ENCODE measurements at regions of chr7 and their contacts with region 1.

Region 1: DNA sequence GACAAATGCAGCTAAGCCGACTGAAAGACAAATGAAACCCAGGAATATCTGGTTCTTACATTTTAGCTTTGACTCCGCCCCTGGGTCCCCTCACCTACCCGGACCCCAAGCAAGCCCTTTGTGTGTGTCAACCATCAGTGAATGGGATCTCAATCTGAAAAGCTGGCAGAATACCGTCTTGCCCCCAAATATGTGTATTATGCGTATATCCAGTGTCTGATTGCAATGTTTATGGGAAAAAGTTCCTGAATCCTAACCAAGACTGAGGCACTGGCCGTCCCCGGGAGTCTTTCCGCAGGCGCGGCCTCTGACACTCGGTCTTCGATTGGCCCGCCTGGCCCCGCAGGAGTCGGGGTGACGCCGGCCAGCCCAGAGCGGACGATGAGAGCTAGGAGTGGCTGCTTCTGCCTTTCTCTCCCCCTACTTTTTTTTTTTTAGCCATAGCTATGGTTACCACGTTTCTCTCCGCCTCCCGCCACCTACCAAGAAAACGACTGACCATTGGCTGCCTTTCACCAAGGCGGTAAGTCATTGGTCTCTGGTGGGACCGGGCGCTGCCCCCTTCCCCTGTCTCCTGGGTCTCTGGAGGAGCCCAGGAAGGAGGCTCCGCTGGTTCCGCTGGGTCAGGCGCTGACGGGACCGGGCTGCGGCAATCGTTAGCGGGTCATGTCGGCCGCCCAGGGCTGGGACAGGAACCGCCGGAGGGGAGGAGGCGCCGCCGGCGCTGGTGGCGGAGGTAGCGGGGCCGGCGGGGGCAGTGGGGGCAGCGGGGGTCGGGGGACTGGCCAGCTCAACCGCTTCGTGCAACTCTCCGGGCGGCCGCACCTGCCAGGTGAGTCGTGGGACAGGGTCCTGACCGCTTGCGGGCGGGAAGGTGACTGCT is at the start of gene KLHDC10:
- DNase-seq: peak; percentile 100
- total RNA-seq, gene KLHDC10: 38.2 and 39.6 TPM in 2 replicates

Region 2: DNA sequence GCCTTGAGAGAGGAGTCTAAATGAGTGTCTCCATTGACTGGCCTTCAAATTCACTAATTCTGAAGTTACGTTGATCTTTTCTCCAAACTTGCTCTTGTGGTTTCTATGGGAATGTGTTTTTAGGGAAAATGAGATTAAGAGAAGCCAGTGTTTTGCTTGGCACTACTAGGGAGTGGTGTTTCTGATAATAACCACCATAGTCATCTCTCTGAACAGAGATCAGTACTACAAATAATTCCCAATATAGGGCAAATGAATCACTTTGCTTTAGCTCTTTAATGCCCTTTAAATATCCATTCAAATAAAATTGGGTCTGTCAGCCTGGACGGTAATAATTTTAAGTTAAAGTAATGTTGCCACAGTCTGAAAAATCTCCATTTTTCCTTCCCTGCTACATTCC is 367.9 kb before region 1 on chr7:
- in situ Hi-C with region 1: no loop called
- DNase-seq: no peak

Region 3: DNA sequence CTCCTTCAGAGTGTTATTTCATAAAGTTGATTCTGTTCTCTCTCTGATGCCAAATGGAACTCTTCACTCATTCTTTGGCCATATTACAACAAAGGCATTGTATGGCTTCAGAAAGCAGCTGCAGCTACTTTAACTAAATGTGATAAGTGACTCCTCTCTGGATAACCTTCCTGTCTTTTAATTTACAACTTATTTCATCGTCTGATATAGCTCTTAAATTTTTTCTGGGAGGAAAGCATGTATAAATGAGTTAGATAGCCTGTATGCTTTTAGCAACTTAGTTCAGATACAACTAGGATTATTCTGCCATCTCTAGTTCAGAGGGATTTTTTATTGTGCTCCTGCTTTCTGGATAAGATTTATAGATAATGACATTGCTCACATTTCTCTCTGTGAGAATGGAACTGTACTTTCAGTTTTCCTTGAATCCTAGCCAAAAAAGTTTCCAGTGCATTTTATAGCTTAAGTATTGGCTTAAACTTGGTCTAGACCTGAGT is 57.6 kb after region 1 on chr7:
- in situ Hi-C with region 1: loop called (anchors 10 kb)
- DNase-seq: no peak

Region 4: DNA sequence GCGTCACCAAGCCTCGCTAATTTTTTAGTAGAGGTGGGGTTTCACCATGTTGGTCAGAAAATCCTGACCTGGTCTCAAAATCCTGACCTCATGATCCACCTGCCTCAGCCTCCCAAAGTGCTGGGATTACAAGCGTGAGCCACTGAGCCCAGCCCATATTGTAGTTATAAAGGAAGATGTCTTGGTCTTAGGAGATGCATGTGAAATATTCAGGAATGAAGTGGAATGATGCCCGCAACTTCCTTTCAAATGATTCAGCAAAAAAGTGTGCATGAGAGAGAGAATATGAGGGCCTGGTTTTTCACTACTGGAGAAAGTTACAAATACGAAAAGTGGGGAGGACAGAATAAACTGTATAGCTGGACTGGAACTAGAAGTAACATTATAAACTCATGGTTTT is 119.1 kb after region 1 on chr7:
- in situ Hi-C with region 1: no loop called
- DNase-seq: no peak

Measured in SK-MEL-5 (cell line).